CD8-positive, alpha-beta T cell (primary cell): ENCODE measurements at regions of chr10 and their contacts with region 1.

Region 1: GRCh38 chr10:71708301-71708703 is 11.3 kb downstream of the C10orf105 start:
- DNase-seq: peak; percentile 38 to 83 (median 68)
- ATAC-seq: peak; percentile 66
- H3K4me3 ChIP-seq: no peak overlapping the region
- H3K4me3 Mint-ChIP-seq: no peak overlapping the region
- H3K27ac ChIP-seq: no peak overlapping the region
- H3K27ac Mint-ChIP-seq: no peak overlapping the region
- H3K4me1 ChIP-seq: peaks cover 31% of the 10 kb centered on the region
- H3K4me1 Mint-ChIP-seq: peaks cover 47% of the 10 kb centered on the region
- H3K27me3 ChIP-seq: no peaks in the 10 kb centered on the region
- H3K27me3 Mint-ChIP-seq: no peaks in the 10 kb centered on the region
- CTCF ChIP-seq: peak; percentile 79

Region 2: GRCh38 chr10:71314028-71314693 is 394.1 kb before region 1 on chr10:
- CTCF ChIA-PET with region 1: interaction called, 30 read pairs
- POLR2A ChIA-PET with region 1: interaction called, 4 read pairs
- intact Hi-C with region 1: loop called (anchors 1 kb)
- DNase-seq: peak in 8 of 9 experiments; percentile 41 to 80 (median 62)
- ATAC-seq: peak; percentile 45
- H3K4me3 ChIP-seq: no peak overlapping the region
- H3K4me3 Mint-ChIP-seq: no peak overlapping the region
- H3K27ac ChIP-seq: no peak overlapping the region
- H3K27ac Mint-ChIP-seq: no peak overlapping the region
- H3K4me1 ChIP-seq: peaks cover 6% of the 10 kb centered on the region
- H3K4me1 Mint-ChIP-seq: peaks cover 11% of the 10 kb centered on the region
- H3K27me3 ChIP-seq: no peaks in the 10 kb centered on the region
- H3K27me3 Mint-ChIP-seq: peaks cover 7% of the 10 kb centered on the region
- CTCF ChIP-seq: peak; percentile 86

Region 3: DNA sequence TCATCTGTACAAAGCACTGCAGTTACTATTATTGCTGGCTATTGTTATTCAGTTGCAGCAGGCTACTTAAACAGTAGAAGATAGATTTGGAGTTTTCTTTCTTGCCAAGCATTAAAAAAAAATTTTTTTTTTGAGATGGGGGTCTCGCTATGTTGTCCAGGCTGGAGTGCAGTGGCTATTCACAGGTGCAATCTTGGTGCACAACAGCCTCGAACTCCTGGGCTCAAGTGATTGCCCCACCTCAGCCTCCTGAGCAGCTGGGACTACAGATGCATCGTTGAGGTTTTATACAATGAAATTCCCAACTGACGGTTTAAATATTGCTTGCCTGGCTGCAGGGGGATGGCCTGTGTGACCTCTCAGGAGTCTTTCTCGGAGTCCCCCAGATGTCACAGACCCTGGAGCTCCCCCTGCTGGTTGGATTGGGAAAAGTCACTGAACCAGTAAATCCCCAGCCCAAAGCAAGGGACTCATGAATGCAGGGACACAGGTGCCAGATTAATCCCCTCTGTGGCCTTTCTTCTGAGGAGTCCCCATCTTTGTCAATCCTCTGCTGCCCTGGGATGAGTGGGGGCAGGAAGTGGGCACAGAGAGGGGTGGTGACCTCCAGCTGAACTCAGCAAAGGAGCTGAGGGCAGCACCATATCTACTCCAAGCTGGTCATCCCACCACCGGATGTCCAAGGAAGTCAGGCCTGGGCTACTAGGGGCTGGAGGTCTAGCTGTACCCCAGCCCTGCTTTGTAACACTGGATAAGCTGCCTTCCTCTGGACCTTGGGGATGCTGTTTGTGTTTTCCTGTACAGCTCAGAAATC is 138.3 kb before region 1 on chr10:
- CTCF ChIA-PET with region 1: interaction called, 18 read pairs
- POLR2A ChIA-PET with region 1: no interaction called
- intact Hi-C with region 1: no loop called
- DNase-seq: peak; percentile 64 to 87 (median 75)
- ATAC-seq: no peak
- H3K4me3 ChIP-seq: no peak overlapping the region
- H3K4me3 Mint-ChIP-seq: no peak overlapping the region
- H3K27ac ChIP-seq: no peak overlapping the region
- H3K27ac Mint-ChIP-seq: no peak overlapping the region
- H3K4me1 ChIP-seq: no peaks in the 10 kb centered on the region
- H3K4me1 Mint-ChIP-seq: no peaks in the 10 kb centered on the region
- H3K27me3 ChIP-seq: no peaks in the 10 kb centered on the region
- H3K27me3 Mint-ChIP-seq: no peaks in the 10 kb centered on the region
- CTCF ChIP-seq: peak; percentile 85

Region 4: DNA sequence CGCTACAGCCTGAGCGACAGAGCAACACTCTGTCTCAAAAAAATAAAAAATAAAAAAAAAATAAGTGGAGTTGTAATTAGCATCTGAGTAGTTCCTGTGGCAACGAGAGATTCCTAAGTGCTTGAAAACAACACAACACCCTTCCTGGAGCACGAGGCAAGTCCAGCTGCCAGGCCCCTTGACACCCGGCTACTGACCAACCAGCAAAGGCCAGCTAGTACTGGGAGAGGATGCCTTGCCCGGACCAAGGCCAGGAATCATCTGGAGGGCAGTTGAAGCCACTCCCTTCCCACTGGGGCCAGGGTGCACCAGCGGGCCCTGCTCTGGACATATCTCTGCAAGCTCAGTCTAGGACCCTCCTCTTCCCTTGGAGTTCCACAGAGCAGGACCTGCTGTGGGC is 10.7 kb after region 1 on chr10:
- CTCF ChIA-PET with region 1: interaction called, 51 read pairs
- POLR2A ChIA-PET with region 1: interaction called, 3 read pairs
- intact Hi-C with region 1: no loop called
- DNase-seq: no peak
- ATAC-seq: no peak
- H3K4me3 ChIP-seq: no peak overlapping the region
- H3K4me3 Mint-ChIP-seq: no peak overlapping the region
- H3K27ac ChIP-seq: no peak overlapping the region
- H3K27ac Mint-ChIP-seq: no peak overlapping the region
- H3K4me1 ChIP-seq: peaks cover 49% of the 10 kb centered on the region
- H3K4me1 Mint-ChIP-seq: peaks cover 54% of the 10 kb centered on the region
- H3K27me3 ChIP-seq: no peaks in the 10 kb centered on the region
- H3K27me3 Mint-ChIP-seq: no peaks in the 10 kb centered on the region
- CTCF ChIP-seq: no peak

Region 5: DNA sequence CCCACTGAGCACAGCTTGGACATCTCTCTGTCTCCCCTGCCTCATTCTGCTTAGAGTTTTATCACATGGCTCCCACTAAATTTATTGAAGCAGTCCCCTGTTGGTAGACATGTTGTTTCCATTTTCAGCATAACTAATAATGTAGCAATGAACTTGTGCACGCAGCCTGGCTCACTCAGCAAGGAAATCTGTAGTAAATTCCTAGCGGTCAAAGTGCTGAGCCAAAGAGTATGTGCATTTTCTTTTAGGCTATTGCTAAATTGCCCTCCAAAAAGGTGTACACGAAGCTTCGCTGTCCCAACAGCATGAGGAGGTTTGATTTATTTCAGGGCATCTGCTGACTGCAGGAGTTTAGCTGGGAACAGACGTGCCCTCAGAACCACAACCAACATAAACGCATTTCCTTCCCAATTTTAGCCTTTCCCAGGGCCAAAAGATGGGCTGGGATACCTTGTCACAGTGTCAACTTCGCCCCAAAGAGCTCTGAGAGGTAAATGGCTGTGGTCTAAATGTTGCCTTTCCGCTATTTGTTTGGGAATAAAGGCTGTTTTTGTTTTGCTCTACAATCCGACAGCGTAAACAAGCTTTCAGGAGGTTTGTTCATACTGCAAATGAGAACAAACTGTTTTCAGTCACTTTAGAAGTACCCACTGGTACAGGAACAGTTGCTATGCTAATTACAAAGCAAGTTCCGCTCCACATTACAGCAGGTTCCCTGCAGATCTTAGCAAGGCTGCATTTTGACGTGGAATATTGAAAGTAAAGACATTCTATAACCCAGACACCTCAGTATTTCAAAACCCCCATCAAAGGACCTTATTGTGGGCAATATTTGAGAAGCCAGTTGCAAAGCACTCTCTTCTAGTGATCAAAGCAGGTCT is 48.2 kb after region 1 on chr10:
- CTCF ChIA-PET with region 1: interaction called, 242 read pairs
- POLR2A ChIA-PET with region 1: interaction called, 14 read pairs
- intact Hi-C with region 1: no loop called
- DNase-seq: peak in 3 of 9 experiments; percentile 29 to 81 (median 61)
- ATAC-seq: peak; percentile 69
- H3K4me3 ChIP-seq: peak overlapping the region; percentile 7 to 38
- H3K4me3 Mint-ChIP-seq: peak overlapping the region; percentile 75
- H3K27ac ChIP-seq: peak overlapping the region; percentile 48 to 73
- H3K27ac Mint-ChIP-seq: peak overlapping the region; percentile 95
- H3K4me1 ChIP-seq: peaks cover 93% of the 10 kb centered on the region
- H3K4me1 Mint-ChIP-seq: peaks cover 91% of the 10 kb centered on the region
- H3K27me3 ChIP-seq: no peaks in the 10 kb centered on the region
- H3K27me3 Mint-ChIP-seq: no peaks in the 10 kb centered on the region
- CTCF ChIP-seq: no peak

Region 6: GRCh38 chr10:71782917-71783490 is 74.7 kb after region 1 on chr10:
- CTCF ChIA-PET with region 1: interaction called, 11 read pairs
- POLR2A ChIA-PET with region 1: no interaction called
- intact Hi-C with region 1: no loop called
- DNase-seq: no peak
- ATAC-seq: no peak
- H3K4me3 ChIP-seq: no peak overlapping the region
- H3K4me3 Mint-ChIP-seq: no peak overlapping the region
- H3K27ac ChIP-seq: no peak overlapping the region
- H3K27ac Mint-ChIP-seq: no peak overlapping the region
- H3K4me1 ChIP-seq: no peaks in the 10 kb centered on the region
- H3K4me1 Mint-ChIP-seq: no peaks in the 10 kb centered on the region
- H3K27me3 ChIP-seq: no peaks in the 10 kb centered on the region
- H3K27me3 Mint-ChIP-seq: no peaks in the 10 kb centered on the region
- CTCF ChIP-seq: no peak